Caco-2 (cell line): ENCODE measurements at regions of chr10 and their contacts with region 1.

Region 1: DNA sequence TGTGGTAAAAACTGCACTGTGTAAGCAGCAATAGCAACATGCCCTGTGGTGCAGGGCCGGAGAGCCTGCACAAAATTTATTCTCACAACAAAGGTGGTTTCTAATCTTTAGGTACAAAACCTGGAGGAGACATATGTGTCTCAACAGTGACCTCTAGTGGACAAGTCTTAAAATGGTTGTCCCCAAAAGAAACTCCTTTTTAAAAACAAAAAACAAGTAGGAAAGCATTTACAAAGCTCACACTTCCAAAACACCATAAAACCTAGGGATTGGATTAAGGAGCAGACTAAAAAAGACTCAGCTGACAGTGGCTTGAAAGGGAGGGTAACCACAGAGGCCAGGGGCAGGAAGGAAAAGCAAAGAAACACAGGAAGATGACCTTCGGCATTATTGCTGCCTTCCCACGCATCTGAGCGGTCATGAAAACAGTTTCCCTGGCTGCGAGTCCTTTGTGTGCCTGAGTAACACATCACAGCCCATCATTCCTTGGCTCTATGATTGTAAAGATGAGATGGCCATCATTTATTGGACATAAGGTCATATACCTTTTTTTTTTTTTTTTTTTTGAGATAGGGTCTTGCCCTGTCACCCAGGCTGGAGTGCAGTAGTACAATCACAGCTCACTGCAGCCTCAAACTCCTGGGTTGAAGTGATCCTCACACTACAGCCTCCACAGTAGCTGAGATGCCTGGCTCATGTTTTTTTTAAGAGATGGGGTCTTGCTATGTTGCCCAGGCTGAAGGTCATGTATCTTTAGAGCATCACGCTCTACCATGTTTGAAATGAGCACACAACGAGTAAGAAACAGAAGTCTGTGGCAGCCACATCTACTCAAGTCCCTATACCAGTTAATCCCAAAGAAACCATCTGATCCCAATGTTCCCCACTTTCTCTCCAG is 39.5 kb downstream of the RSU1 start:
- DNase-seq: peak in 1 of 2 experiments; percentile 49
- H3K4me3 ChIP-seq: no peak overlapping the region
- H3K4me3 Mint-ChIP-seq: no peak overlapping the region
- H3K27ac Mint-ChIP-seq: no peak overlapping the region
- H3K4me1 ChIP-seq: no peaks in the 10 kb centered on the region
- H3K4me1 Mint-ChIP-seq: no peaks in the 10 kb centered on the region
- H3K27me3 ChIP-seq: no peaks in the 10 kb centered on the region
- H3K27me3 Mint-ChIP-seq: no peaks in the 10 kb centered on the region
- CTCF ChIP-seq: peak; percentile 79 to 85

Region 2: DNA sequence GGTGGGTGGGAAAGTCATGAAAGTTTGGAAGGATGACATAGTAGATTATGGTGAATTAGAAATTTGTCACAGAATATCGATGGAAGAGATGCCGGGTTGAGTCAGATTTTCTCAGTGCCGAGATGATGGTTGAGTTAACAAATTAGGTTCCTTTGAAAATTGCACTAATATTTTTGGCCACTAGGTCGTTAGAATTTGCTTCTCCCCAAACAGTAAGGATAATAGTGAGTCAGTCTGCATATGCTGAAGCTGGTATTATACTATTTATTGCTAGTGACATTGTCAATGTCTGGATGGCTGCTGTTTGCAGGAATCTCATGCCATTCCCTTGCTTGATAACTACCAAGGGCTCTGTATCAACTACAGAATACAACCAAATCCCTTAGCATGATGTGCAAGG is 879.7 kb before region 1 on chr10:
- CTCF ChIA-PET with region 1: interaction called, 15 read pairs
- POLR2A ChIA-PET with region 1: no interaction called
- intact Hi-C with region 1: loop called (anchors 1 kb)
- DNase-seq: peak in 1 of 2 experiments; percentile 13
- H3K4me3 ChIP-seq: no peak overlapping the region
- H3K4me3 Mint-ChIP-seq: no peak overlapping the region
- H3K27ac Mint-ChIP-seq: no peak overlapping the region
- H3K4me1 ChIP-seq: no peaks in the 10 kb centered on the region
- H3K4me1 Mint-ChIP-seq: peaks cover 7% of the 10 kb centered on the region
- H3K27me3 ChIP-seq: peaks cover 3% of the 10 kb centered on the region; the same call in 1 of the 2 replicates
- H3K27me3 Mint-ChIP-seq: peaks cover 12% of the 10 kb centered on the region
- CTCF ChIP-seq: peak; percentile 34 to 41

Region 3: GRCh38 chr10:16314259-16314658 is 463.5 kb before region 1 on chr10:
- CTCF ChIA-PET with region 1: no interaction called
- POLR2A ChIA-PET with region 1: no interaction called
- intact Hi-C with region 1: loop called (anchors 10 kb)
- DNase-seq: peak; percentile 29 to 43
- H3K4me3 ChIP-seq: no peak overlapping the region
- H3K4me3 Mint-ChIP-seq: no peak overlapping the region
- H3K27ac Mint-ChIP-seq: no peak overlapping the region
- H3K4me1 ChIP-seq: no peaks in the 10 kb centered on the region
- H3K4me1 Mint-ChIP-seq: no peaks in the 10 kb centered on the region
- H3K27me3 ChIP-seq: no peaks in the 10 kb centered on the region
- H3K27me3 Mint-ChIP-seq: no peaks in the 10 kb centered on the region
- CTCF ChIP-seq: peak; percentile 15 to 50

Region 4: GRCh38 chr10:16341637-16342036 is 436.1 kb before region 1 on chr10:
- CTCF ChIA-PET with region 1: no interaction called
- POLR2A ChIA-PET with region 1: no interaction called
- intact Hi-C with region 1: no loop called
- DNase-seq: no peak
- H3K4me3 ChIP-seq: no peak overlapping the region
- H3K4me3 Mint-ChIP-seq: no peak overlapping the region
- H3K27ac Mint-ChIP-seq: no peak overlapping the region
- H3K4me1 ChIP-seq: no peaks in the 10 kb centered on the region
- H3K4me1 Mint-ChIP-seq: no peaks in the 10 kb centered on the region
- H3K27me3 ChIP-seq: no peaks in the 10 kb centered on the region
- H3K27me3 Mint-ChIP-seq: peaks cover 5% of the 10 kb centered on the region
- CTCF ChIP-seq: no peak

Region 5: DNA sequence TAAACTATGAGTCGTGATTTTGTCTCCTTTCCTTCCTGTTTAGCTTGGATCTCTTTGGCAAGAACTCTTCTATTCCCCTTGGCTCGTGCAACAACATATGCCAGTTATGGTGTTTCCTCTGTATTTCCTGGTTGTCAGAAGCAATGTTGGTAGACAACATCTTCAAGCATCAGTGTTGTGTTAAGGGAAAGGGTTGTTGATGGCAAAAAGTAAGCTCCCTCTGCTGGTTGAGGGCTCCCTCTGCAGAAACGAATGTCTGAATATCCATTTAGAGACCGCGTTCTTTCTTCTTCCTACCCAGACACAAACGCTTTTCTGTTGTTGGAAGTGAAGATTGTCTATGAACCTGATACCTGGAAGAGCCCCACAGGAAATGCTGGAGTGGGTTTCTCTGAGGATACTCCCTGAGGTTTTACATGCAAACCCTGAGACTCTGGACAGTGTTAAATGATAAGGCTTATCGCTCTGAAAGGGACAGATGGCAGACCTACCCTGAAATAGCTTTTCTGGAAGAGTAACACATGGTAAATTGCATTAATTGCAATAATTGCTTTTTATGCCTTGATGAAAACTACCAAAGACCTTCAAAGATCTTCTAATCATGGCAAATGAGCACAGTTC is 232.5 kb before region 1 on chr10:
- CTCF ChIA-PET with region 1: no interaction called
- POLR2A ChIA-PET with region 1: no interaction called
- intact Hi-C with region 1: loop called (anchors 5 kb)
- DNase-seq: peak in 1 of 2 experiments; percentile 45
- H3K4me3 ChIP-seq: no peak overlapping the region
- H3K4me3 Mint-ChIP-seq: no peak overlapping the region
- H3K27ac Mint-ChIP-seq: no peak overlapping the region
- H3K4me1 ChIP-seq: no peaks in the 10 kb centered on the region
- H3K4me1 Mint-ChIP-seq: no peaks in the 10 kb centered on the region
- H3K27me3 ChIP-seq: no peaks in the 10 kb centered on the region
- H3K27me3 Mint-ChIP-seq: peaks cover 8% of the 10 kb centered on the region
- CTCF ChIP-seq: peak; percentile 56 to 87

Region 6: GRCh38 chr10:16673443-16673842 is 104.3 kb before region 1 on chr10:
- CTCF ChIA-PET with region 1: no interaction called
- POLR2A ChIA-PET with region 1: no interaction called
- intact Hi-C with region 1: loop called (anchors 2 kb)
- DNase-seq: no peak
- H3K4me3 ChIP-seq: no peak overlapping the region
- H3K4me3 Mint-ChIP-seq: no peak overlapping the region
- H3K27ac Mint-ChIP-seq: no peak overlapping the region
- H3K4me1 ChIP-seq: no peaks in the 10 kb centered on the region
- H3K4me1 Mint-ChIP-seq: peaks cover 7% of the 10 kb centered on the region
- H3K27me3 ChIP-seq: no peaks in the 10 kb centered on the region
- H3K27me3 Mint-ChIP-seq: no peaks in the 10 kb centered on the region
- CTCF ChIP-seq: no peak